Mammary epithelial cell (primary cell): ENCODE measurements at regions of chr15 and their contacts with region 1.

Region 1: DNA sequence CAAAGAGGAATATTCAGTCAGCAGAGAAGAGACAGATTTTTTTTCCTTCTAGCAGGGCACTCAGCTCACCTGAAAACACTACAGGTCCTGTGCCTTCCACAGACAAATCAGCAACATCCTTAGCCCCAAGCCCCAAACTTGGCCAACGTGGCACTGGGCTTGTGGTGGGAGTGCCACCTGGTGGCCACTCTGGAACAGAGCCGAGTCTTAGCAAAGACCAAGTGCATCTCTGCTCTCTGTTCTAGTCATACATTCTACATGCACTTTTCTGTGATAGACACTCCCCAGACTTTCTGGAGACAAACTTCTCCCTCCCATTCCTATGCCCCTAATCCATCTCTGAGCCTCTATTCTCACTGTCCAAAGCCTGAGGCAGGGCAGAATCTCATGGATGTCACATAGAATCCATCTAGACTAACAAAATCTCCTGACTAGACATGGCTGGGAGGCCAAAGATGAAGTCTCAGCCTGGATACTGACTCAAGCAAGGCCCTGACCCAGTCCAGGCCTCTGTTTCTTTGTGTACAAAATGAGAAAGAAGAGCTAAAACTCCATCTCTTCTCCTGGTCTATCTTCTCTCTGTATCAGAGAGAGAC is 5.1 kb upstream of the SEMA7A start:
- DNase-seq: peak; percentile 73
- H3K4me3 ChIP-seq: no peak overlapping the region
- H3K27ac ChIP-seq: no peak overlapping the region
- H3K4me1 ChIP-seq: peaks cover 4% of the 10 kb centered on the region
- H3K27me3 ChIP-seq: no peaks in the 10 kb centered on the region
- CTCF ChIP-seq: peak; percentile 97 to 98

Region 2: GRCh38 chr15:74407055-74407691 is 31.6 kb before region 1 on chr15:
- CTCF ChIA-PET with region 1: no interaction called
- dilution Hi-C with region 1: no loop called
- in situ Hi-C with region 1: no loop called
- intact Hi-C with region 1: no loop called
- DNase-seq: peak; percentile 88
- H3K4me3 ChIP-seq: no peak overlapping the region
- H3K27ac ChIP-seq: peak overlapping the region; percentile 56
- H3K4me1 ChIP-seq: peaks cover 30% of the 10 kb centered on the region
- H3K27me3 ChIP-seq: no peaks in the 10 kb centered on the region
- CTCF ChIP-seq: peak in 1 of 2 donors; percentile 17

Region 3: GRCh38 chr15:74422650-74423430 is 16.0 kb before region 1 on chr15:
- CTCF ChIA-PET with region 1: no interaction called
- dilution Hi-C with region 1: no loop called
- in situ Hi-C with region 1: no loop called
- intact Hi-C with region 1: loop called (anchors 2 kb)
- DNase-seq: peak; percentile 83
- H3K4me3 ChIP-seq: no peak overlapping the region
- H3K27ac ChIP-seq: peak overlapping the region; percentile 87
- H3K4me1 ChIP-seq: peaks cover 72% of the 10 kb centered on the region
- H3K27me3 ChIP-seq: no peaks in the 10 kb centered on the region
- CTCF ChIP-seq: no peak

Region 4: GRCh38 chr15:74489518-74490338 is 50.9 kb after region 1 on chr15:
- CTCF ChIA-PET with region 1: no interaction called
- dilution Hi-C with region 1: no loop called
- in situ Hi-C with region 1: no loop called
- intact Hi-C with region 1: loop called (anchors 2 kb)
- DNase-seq: peak; percentile 20
- H3K4me3 ChIP-seq: no peak overlapping the region
- H3K27ac ChIP-seq: no peak overlapping the region
- H3K4me1 ChIP-seq: no peaks in the 10 kb centered on the region
- H3K27me3 ChIP-seq: no peaks in the 10 kb centered on the region
- CTCF ChIP-seq: peak; percentile 50 to 72

Region 5: DNA sequence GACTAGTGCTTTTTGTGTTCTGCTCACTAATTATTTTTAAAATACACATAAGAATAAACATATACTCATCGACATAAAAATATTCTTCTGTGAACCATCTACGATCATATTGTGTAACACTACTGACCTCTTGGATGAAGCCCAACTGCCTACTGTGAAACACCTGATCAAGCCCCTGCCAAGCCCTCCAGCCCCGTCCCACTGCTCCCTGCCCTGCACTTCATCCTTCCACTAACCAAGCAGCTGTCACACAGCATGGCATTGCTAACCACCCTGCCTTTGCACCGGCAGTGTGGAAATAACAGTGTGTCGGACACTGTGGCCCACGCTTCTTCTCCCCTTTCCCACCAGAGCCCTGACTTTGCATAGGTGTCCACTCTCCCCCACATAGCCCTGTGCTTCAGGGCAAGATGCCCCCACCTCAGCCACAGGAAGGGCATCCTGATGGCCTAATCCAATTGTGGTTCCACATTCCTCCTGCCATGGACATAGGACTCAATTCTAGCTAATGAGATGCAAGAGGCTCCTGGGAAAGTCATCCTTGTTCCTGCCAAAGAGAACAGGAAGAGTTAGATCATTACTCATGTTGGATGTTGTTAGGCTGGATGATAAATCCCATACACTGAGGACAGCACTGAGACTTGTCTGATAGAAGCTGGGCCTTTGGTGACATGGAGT is 67.2 kb after region 1 on chr15:
- CTCF ChIA-PET with region 1: no interaction called
- dilution Hi-C with region 1: no loop called
- in situ Hi-C with region 1: no loop called
- intact Hi-C with region 1: no loop called
- DNase-seq: peak; percentile 40
- H3K4me3 ChIP-seq: no peak overlapping the region
- H3K27ac ChIP-seq: no peak overlapping the region
- H3K4me1 ChIP-seq: no peaks in the 10 kb centered on the region
- H3K27me3 ChIP-seq: no peaks in the 10 kb centered on the region
- CTCF ChIP-seq: no peak